HepG2 (cell line): ENCODE measurements at regions of chr14 and their contacts with region 1.

Region 1: DNA sequence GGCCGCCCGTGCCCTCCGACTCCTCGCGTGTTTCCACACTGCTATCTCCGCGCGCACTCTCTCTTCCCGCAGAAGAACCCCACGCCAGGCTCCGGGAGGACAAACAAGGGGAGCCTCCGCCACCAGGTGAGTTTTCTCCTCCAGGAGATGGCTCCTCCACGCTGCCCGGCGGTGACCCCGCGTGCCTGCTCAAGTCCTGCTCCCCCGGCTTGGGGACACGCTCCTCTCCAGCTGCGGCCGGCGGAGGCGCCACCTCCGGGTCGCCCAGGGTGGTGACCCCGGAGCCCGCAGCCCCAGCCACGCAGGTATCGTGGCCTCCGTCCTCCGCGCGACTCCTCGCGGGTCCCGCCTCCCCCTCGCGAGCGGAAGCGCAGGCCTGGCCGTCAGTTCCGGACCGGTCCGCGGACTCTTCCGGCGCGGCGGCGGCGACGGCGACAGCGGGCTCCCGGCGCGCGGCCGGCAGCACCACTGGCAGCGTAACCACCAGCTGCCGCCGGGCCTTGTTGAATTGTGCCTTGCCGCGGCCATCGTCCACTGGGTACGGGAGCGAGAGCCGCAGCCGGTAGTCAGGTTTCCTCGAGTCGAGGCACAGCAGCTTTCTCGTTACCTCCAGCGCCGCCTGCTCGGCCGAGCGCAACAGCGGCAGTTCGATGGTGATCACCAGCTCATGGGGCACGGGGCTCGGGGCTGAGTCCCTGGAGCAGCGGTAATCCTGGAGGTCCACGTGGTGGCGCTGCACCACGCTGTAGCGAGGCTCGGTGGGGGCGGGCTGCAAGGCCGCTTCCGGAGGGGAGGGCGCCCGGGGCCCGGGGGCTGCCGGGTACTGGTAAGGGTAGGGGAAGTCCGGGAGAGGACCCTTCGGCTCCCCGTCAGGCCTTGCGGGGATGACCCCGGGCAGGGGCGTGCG is 1.2 kb downstream of the DNAAF2 start:
- DNase-seq: peak; percentile 89
- ATAC-seq: peak; percentile 85
- H3K4me3 ChIP-seq: peak overlapping the region; percentile 87 to 99 (median 96)
- H3K27ac ChIP-seq: peak overlapping the region; percentile 93
- H3K4me1 ChIP-seq: peaks cover 54% of the 10 kb centered on the region
- H3K27me3 ChIP-seq: no peaks in the 10 kb centered on the region; a peak in 1 of 5 replicates
- CTCF ChIP-seq: peak; percentile 99
- EP300 ChIP-seq: no peak
- POLR2A ChIP-seq: peak; percentile 74 to 83
- RAD21 ChIP-seq: peak; percentile 93

Region 2: GRCh38 chr14:49585803-49586672 is 47.9 kb before region 1 on chr14 and contains the start of gene RPS29:
- CTCF ChIA-PET with region 1: interaction called, 6 read pairs
- POLR2A ChIA-PET with region 1: interaction called, 12 read pairs
- in situ Hi-C with region 1: no loop called
- intact Hi-C with region 1: no loop called
- DNase-seq: peak; percentile 99
- ATAC-seq: peak; percentile 85
- H3K4me3 ChIP-seq: peak within 1 kb of the TSS; percentile 82 to 98 (median 94)
- H3K27ac ChIP-seq: peak within 1 kb of the TSS; percentile 89
- H3K4me1 ChIP-seq: peaks cover 48% of the 10 kb centered on the region
- H3K27me3 ChIP-seq: no peaks in the 10 kb centered on the region; a peak in 1 of 5 replicates
- CTCF ChIP-seq: no peak; the same call in 1 of the 2 replicates
- EP300 ChIP-seq: 0 out of 4 replicates have a peak, but pooled peaks of 1 of the 2 experiments have one; percentile 52
- POLR2A ChIP-seq: peak; percentile 89 to 98
- RAD21 ChIP-seq: peak; percentile 17
- total RNA-seq, gene RPS29: 3,901 and 4,303 TPM in 2 replicates

Region 3: GRCh38 chr14:49620182-49621113 is 13.4 kb before region 1 on chr14 and contains the starts of genes MGAT2 and RPL36AL:
- CTCF ChIA-PET with region 1: interaction called, 3 read pairs
- POLR2A ChIA-PET with region 1: interaction called, 65 read pairs
- in situ Hi-C with region 1: no loop called
- intact Hi-C with region 1: no loop called
- DNase-seq: peak; percentile 95
- ATAC-seq: peak; percentile 97
- H3K4me3 ChIP-seq: peak within 1 kb of the TSS; percentile 81 to 92 (median 92)
- H3K27ac ChIP-seq: peak within 1 kb of the TSS; percentile 94
- H3K4me1 ChIP-seq: peaks cover 62% of the 10 kb centered on the region
- H3K27me3 ChIP-seq: no peaks in the 10 kb centered on the region; a peak in 1 of 5 replicates
- CTCF ChIP-seq: peak; percentile 46
- EP300 ChIP-seq: peak in 1 of 2 experiments; percentile 57; a peak in 1 of 4 replicates
- POLR2A ChIP-seq: peak; percentile 97 to 98
- RAD21 ChIP-seq: peak; percentile 63
- total RNA-seq, gene MGAT2: 47.2 and 51.9 TPM in 2 replicates
- total RNA-seq, gene RPL36AL: 294 and 383 TPM in 2 replicates

Region 4: GRCh38 chr14:49720744-49721143 is 86.9 kb after region 1 on chr14:
- CTCF ChIA-PET with region 1: no interaction called
- POLR2A ChIA-PET with region 1: no interaction called
- in situ Hi-C with region 1: no loop called
- intact Hi-C with region 1: loop called (anchors 1 kb)
- DNase-seq: no peak
- ATAC-seq: no peak
- H3K4me3 ChIP-seq: no peak overlapping the region
- H3K27ac ChIP-seq: no peak overlapping the region
- H3K4me1 ChIP-seq: peaks cover 21% of the 10 kb centered on the region
- H3K27me3 ChIP-seq: no peaks in the 10 kb centered on the region
- CTCF ChIP-seq: no peak
- EP300 ChIP-seq: no peak
- POLR2A ChIP-seq: no peak
- RAD21 ChIP-seq: no peak

Region 5: GRCh38 chr14:49852301-49853157 is 218.6 kb after region 1 on chr14 and contains the start of gene NEMF:
- CTCF ChIA-PET with region 1: no interaction called
- POLR2A ChIA-PET with region 1: interaction called, 16 read pairs
- in situ Hi-C with region 1: no loop called
- intact Hi-C with region 1: loop called (anchors 1 kb)
- DNase-seq: peak; percentile 87
- ATAC-seq: peak; percentile 87
- H3K4me3 ChIP-seq: peak within 1 kb of the TSS; percentile 95 to 97 (median 96)
- H3K27ac ChIP-seq: peak within 1 kb of the TSS; percentile 89
- H3K4me1 ChIP-seq: peaks cover 19% of the 10 kb centered on the region
- H3K27me3 ChIP-seq: no peaks in the 10 kb centered on the region; a peak in 1 of 5 replicates
- CTCF ChIP-seq: peak; percentile 83
- EP300 ChIP-seq: no peak
- POLR2A ChIP-seq: peak; percentile 90 to 93
- RAD21 ChIP-seq: no peak; the same call in 1 of the 2 replicates
- total RNA-seq, gene NEMF: 57.9 and 62.5 TPM in 2 replicates